HepG2 (cell line): ENCODE measurements at regions of chr22 and their contacts with region 1.

Region 1: GRCh38 chr22:32528984-32529982 is 54.7 kb downstream of the FBXO7 start:
- DNase-seq: peak; percentile 91
- ATAC-seq: peak; percentile 72
- H3K4me3 ChIP-seq: peak overlapping the region; percentile 27 to 52 (median 51); a peak in 3 of 6 replicates
- H3K27ac ChIP-seq: peak overlapping the region; percentile 76
- H3K4me1 ChIP-seq: peaks cover 65% of the 10 kb centered on the region
- H3K27me3 ChIP-seq: no peaks in the 10 kb centered on the region
- CTCF ChIP-seq: peak; percentile 99
- EP300 ChIP-seq: peak in 1 of 2 experiments; percentile 75; a peak in 2 of 4 replicates
- POLR2A ChIP-seq: 0 out of 4 replicates have a peak, but pooled peaks of 1 of the 2 experiments have one; percentile 31
- RAD21 ChIP-seq: peak; percentile 97

Region 2: DNA sequence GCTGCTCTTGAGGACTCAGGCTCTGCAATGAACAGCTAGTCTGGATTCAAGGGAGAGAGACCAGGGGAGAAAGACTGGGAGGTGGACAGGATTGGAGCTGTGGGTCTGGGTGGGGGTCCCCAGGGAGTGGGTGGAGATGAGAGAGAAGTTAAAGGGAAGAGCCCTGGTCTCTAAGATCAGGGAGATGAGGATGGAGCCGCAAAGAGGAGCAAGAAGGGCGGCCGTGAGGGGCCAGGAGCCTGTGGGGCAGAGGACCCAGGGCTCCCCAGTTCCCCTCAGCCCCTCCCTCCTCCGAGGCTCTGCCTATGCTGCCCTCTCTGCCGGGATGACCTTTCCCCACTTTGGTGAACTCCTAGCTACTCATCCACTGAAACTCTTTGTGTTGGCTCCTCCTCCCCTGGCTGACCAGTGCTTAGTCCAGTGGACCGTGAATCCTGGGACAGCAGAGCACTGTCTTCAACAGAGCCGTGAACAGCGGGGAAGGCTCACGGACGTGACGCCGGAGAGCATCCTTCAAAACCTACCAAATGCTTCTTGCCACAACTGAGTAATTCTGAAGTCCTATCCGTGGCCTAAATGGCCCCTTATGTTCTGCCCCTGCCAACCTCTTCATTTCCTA is 188.1 kb before region 1 on chr22:
- CTCF ChIA-PET with region 1: no interaction called
- POLR2A ChIA-PET with region 1: no interaction called
- in situ Hi-C with region 1: no loop called
- intact Hi-C with region 1: no loop called
- DNase-seq: no peak
- ATAC-seq: peak; percentile 71
- H3K4me3 ChIP-seq: no peak overlapping the region
- H3K27ac ChIP-seq: no peak overlapping the region
- H3K4me1 ChIP-seq: peaks cover 6% of the 10 kb centered on the region; the same call in 1 of the 2 replicates
- H3K27me3 ChIP-seq: peaks cover 3 to 12% of the 10 kb centered on the region in 2 experiments; a peak in 3 of 5 replicates
- CTCF ChIP-seq: no peak
- EP300 ChIP-seq: no peak
- POLR2A ChIP-seq: no peak
- RAD21 ChIP-seq: no peak

Region 3: DNA sequence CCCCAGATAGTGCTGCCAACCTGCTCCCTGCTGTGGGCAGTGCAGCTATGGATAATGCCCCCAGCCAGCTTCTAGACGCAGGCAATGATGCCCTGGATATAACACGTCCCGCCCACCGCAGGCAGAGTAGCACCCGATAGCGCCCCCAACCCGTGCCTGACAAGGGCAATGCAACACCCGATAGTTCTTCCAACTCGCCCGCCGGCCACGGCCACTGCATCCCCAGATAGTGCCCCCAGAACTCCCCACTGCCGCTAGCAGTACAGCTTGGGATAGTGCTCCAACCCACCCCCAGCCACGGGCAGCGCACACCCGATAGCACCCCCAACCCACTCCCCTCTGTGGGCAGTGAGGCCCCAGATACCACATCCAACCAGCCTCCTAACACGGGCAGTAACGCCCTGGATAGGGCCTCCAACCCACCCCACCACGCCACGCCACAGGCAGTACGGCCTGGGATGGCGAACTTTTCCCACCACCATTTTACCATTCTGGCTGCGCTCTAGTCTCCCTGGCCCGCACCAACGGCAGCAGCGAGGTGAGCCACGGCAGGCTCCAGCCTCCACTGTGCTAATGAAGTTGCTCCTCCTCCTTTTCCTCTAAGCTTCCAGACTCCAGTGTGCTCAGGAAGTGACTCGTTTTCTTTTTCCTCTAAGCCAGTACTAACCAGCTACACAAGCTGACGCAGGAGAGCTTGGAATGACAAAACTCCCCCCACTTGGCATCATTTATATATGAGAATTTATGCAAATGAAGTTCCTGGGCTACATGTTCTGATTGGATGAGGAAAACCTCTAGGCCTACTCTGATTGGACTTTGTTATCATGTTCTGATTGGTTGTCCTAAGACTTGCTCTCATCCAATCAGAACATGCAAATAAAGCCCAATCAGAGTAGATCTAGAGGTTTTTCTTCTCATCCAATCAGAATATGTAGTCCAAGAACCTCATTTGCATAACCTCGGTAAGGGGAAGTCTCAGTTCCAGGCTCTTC is 174.6 kb before region 1 on chr22:
- CTCF ChIA-PET with region 1: no interaction called
- POLR2A ChIA-PET with region 1: no interaction called
- in situ Hi-C with region 1: no loop called
- intact Hi-C with region 1: no loop called
- DNase-seq: no peak
- ATAC-seq: no peak
- H3K4me3 ChIP-seq: no peak overlapping the region
- H3K27ac ChIP-seq: no peak overlapping the region
- H3K4me1 ChIP-seq: no peaks in the 10 kb centered on the region
- H3K27me3 ChIP-seq: no peaks in the 10 kb centered on the region
- CTCF ChIP-seq: no peak
- EP300 ChIP-seq: no peak
- POLR2A ChIP-seq: no peak
- RAD21 ChIP-seq: no peak

Region 4: DNA sequence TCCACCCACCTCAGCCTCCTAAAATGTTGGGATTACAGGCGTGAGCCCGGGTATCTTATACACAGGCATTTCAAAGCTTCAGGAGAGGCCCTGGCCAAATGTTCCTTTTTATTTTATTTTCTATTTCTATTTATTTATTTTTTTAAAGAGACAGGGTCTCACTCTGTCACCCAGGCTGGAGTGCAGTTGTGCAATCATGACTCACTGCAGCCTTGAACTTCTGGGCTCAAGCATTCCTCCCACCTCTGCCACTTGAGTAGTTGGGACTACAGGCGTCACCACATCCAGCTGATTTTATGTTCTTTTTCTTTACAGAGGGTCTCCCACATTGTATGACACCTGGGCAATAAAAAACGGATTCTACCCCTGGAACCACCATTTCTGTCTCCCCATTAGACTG is 16.5 kb after region 1 on chr22:
- CTCF ChIA-PET with region 1: no interaction called
- POLR2A ChIA-PET with region 1: interaction called, 11 read pairs
- in situ Hi-C with region 1: no loop called
- intact Hi-C with region 1: no loop called
- DNase-seq: peak; percentile 69
- ATAC-seq: peak; percentile 62
- H3K4me3 ChIP-seq: no peak overlapping the region
- H3K27ac ChIP-seq: no peak overlapping the region
- H3K4me1 ChIP-seq: peaks cover 18% of the 10 kb centered on the region
- H3K27me3 ChIP-seq: no peaks in the 10 kb centered on the region
- CTCF ChIP-seq: no peak
- EP300 ChIP-seq: 0 out of 4 replicates have a peak, but pooled peaks have one; percentile 19 to 21
- POLR2A ChIP-seq: no peak
- RAD21 ChIP-seq: no peak

Region 5: GRCh38 chr22:32587449-32587848 is 58.2 kb after region 1 on chr22:
- CTCF ChIA-PET with region 1: no interaction called
- POLR2A ChIA-PET with region 1: interaction called, 143 read pairs
- in situ Hi-C with region 1: no loop called
- intact Hi-C with region 1: loop called (anchors 1 kb)
- DNase-seq: no peak
- ATAC-seq: no peak
- H3K4me3 ChIP-seq: no peak overlapping the region
- H3K27ac ChIP-seq: no peak overlapping the region
- H3K4me1 ChIP-seq: peaks cover 41% of the 10 kb centered on the region
- H3K27me3 ChIP-seq: no peaks in the 10 kb centered on the region
- CTCF ChIP-seq: no peak
- EP300 ChIP-seq: no peak
- POLR2A ChIP-seq: no peak
- RAD21 ChIP-seq: no peak

Region 6: GRCh38 chr22:32644252-32645100 is 115.2 kb after region 1 on chr22:
- CTCF ChIA-PET with region 1: no interaction called
- POLR2A ChIA-PET with region 1: interaction called, 9 read pairs
- in situ Hi-C with region 1: no loop called
- intact Hi-C with region 1: loop called (anchors 1 kb)
- DNase-seq: peak; percentile 98
- ATAC-seq: peak; percentile 98
- H3K4me3 ChIP-seq: peak overlapping the region in 2 of 3 experiments; percentile 37 to 61; a peak in 5 of 6 replicates
- H3K27ac ChIP-seq: peak overlapping the region; percentile 94
- H3K4me1 ChIP-seq: peaks cover 30% of the 10 kb centered on the region
- H3K27me3 ChIP-seq: no peaks in the 10 kb centered on the region
- CTCF ChIP-seq: peak; percentile 74
- EP300 ChIP-seq: peak in 1 of 2 experiments; percentile 90; a peak in 2 of 4 replicates
- POLR2A ChIP-seq: peak; percentile 71 to 73
- RAD21 ChIP-seq: peak; percentile 52; the same call in 1 of the 2 replicates

Region 7: GRCh38 chr22:32788909-32789624 is 259.8 kb after region 1 on chr22:
- CTCF ChIA-PET with region 1: interaction called, 4 read pairs
- POLR2A ChIA-PET with region 1: interaction called, 108 read pairs
- in situ Hi-C with region 1: no loop called
- intact Hi-C with region 1: no loop called
- DNase-seq: peak; percentile 74
- ATAC-seq: peak; percentile 68
- H3K4me3 ChIP-seq: no peak overlapping the region
- H3K27ac ChIP-seq: peak overlapping the region; percentile 70
- H3K4me1 ChIP-seq: peaks cover 97% of the 10 kb centered on the region
- H3K27me3 ChIP-seq: no peaks in the 10 kb centered on the region
- CTCF ChIP-seq: no peak
- EP300 ChIP-seq: peak in 1 of 2 experiments; percentile 55; a peak in 1 of 4 replicates
- POLR2A ChIP-seq: no peak
- RAD21 ChIP-seq: no peak

Region 8: GRCh38 chr22:32823024-32823730 is 293.9 kb after region 1 on chr22:
- CTCF ChIA-PET with region 1: interaction called, 15 read pairs
- POLR2A ChIA-PET with region 1: no interaction called
- in situ Hi-C with region 1: no loop called
- intact Hi-C with region 1: loop called (anchors 1 kb)
- DNase-seq: peak; percentile 62
- ATAC-seq: peak; percentile 78
- H3K4me3 ChIP-seq: no peak overlapping the region
- H3K27ac ChIP-seq: no peak overlapping the region
- H3K4me1 ChIP-seq: no peaks in the 10 kb centered on the region
- H3K27me3 ChIP-seq: no peaks in the 10 kb centered on the region
- CTCF ChIP-seq: peak; percentile 74
- EP300 ChIP-seq: no peak
- POLR2A ChIP-seq: no peak
- RAD21 ChIP-seq: 0 out of 2 replicates have a peak, but pooled peaks have one; percentile 52

Region 9: DNA sequence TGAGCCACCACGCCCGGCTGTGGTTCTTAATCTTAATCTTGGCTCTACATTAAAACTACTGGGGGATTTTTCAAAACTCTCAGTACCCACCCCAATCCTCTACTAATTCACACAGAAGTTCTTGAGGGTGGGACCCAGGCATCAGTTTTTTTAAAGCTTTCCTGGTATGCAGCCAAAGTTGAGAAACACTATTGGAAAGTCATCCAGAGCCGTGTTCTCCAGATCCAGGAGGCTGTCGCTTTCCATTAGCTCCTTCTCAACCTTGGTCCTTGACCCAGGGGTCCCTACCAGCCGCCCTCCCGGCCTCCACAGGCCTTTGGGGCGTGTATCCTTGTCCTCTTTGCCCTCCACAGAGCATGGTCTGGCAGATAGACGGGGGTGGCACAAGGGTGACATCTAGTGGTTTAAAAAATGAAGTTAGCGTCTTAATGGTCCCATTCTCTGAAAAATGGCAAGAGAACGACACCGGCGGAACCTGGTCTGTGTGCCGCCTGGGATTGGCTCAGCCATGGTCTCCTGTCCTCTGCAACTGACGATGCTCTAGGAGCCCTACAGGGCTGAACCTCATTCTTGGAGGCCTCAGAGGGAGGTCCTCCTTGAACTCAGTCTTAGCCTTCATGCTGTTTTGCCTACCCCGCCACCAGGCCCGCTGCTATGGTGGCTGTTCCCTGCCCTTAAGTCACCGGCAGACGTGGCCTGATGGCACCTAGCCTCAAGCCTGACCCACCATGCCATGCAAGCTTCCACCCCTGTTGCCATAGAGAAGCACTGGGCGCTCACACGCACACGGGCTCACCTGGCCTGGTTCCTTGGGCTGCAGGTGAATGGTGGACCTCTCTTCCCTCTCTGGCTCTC is 680.9 kb after region 1 on chr22:
- CTCF ChIA-PET with region 1: no interaction called
- POLR2A ChIA-PET with region 1: no interaction called
- in situ Hi-C with region 1: loop called (anchors 25 kb)
- intact Hi-C with region 1: no loop called
- DNase-seq: peak; percentile 47
- ATAC-seq: peak; percentile 95
- H3K4me3 ChIP-seq: no peak overlapping the region
- H3K27ac ChIP-seq: no peak overlapping the region
- H3K4me1 ChIP-seq: no peaks in the 10 kb centered on the region
- H3K27me3 ChIP-seq: peaks cover 0 to 37% of the 10 kb centered on the region in 2 experiments; a peak in 2 of 5 replicates
- CTCF ChIP-seq: peak; percentile 81
- EP300 ChIP-seq: no peak
- POLR2A ChIP-seq: no peak
- RAD21 ChIP-seq: peak; percentile 58